ENCODE measurements at regions of chr11 and their contacts with region 1.

Region 1: GRCh38 chr11:14914541-14914940 is 22.5 kb upstream of the CYP2R1 start:
- DNase-seq: no peak
- H3K4me3 ChIP-seq: no peak overlapping the region
- H3K27ac ChIP-seq: no peak overlapping the region
- H3K4me1 ChIP-seq: no peaks in the 10 kb centered on the region
- H3K27me3 ChIP-seq: peaks cover 11% of the 10 kb centered on the region

Region 2: DNA sequence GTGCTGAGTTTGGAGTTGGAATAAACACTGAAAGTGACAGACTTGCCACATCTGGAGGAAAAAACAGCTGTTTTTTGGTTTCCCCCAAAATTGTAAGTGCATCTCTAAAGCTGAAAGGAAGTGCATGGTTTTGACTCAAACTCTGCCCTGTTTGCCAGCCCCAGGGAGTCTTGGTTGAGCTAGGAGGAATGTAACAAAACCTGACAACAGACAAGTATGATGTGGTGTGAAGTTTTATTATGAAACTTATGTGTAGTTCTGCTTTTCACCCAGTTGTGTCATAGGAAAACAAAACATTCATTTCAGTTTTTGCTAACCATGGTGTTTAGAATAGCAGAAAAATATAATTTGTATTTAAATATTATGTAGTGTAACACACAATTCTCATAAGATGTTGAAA is 302.6 kb before region 1 on chr11:
- in situ Hi-C with region 1: no loop called
- DNase-seq: no peak
- H3K4me3 ChIP-seq: no peak overlapping the region
- H3K27ac ChIP-seq: no peak overlapping the region
- H3K4me1 ChIP-seq: no peaks in the 10 kb centered on the region
- H3K27me3 ChIP-seq: 0 out of 2 replicates have a peak, but pooled peaks cover 3% of the 10 kb centered on the region

Region 3: GRCh38 chr11:15074206-15075161 is 159.9 kb after region 1 on chr11:
- in situ Hi-C with region 1: loop called (anchors 10 kb)
- DNase-seq: peak; percentile 87
- H3K4me3 ChIP-seq: peak overlapping the region; percentile 63
- H3K27ac ChIP-seq: no peak overlapping the region
- H3K4me1 ChIP-seq: peaks cover 11% of the 10 kb centered on the region; the same call in 1 of the 2 replicates
- H3K27me3 ChIP-seq: peaks cover 22% of the 10 kb centered on the region